B cell (primary cell): ENCODE measurements at regions of chr2 and their contacts with region 1.

Region 1: DNA sequence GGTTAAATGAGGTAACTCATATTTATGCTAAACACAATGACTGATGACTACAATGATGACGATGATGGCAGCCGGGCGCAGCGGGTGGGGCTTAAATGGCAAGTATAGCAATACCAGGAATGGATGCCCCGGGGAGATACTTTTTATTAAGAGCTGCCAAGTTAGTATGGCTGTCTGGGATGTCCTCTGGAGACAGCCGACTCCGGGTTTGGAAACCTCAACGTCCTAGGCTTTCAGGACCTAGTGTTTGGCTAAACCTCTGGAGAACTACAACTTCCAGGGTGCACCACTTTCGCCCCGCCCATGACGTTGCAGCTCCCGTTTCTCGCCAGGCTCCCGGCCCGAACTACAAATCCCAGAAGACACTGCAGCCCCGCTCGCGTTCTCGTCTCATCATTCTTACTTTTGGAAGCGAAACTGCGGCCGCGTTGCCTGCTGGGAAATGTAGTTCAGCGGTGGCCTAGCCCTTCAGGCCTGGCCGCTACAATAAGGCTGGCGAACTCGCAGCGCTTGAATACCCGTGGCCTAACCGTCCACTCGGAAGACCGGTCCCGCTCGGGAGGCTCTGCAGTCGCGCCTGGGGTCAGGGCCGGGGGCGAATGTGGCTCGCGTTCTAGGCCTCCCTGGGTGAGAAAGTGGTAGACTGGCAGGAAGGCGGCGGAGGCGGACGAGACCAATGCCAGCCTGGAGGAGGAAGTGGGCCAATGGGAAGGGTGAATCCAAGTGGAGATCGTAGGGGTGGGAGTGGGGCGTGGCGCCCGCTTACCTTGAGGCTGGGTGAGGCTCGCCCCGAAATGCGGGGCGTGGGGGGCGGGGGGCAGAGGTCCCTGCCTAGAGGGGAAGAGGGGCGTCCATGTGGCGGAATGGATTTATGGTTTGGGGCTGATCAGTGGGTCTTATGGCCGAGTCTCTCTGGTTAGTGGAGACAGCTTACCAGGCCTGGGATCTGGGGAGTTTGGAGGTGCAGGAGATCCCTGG is at the start of gene SMARCAL1:
- DNase-seq: peak; percentile 99
- ATAC-seq: peak; percentile 94
- H3K4me3 ChIP-seq: peak within 1 kb of the TSS; percentile 17 to 94 (median 78)
- H3K4me3 Mint-ChIP-seq: peak within 1 kb of the TSS; percentile 99
- H3K27ac ChIP-seq: peak within 1 kb of the TSS; percentile 78 to 91
- H3K27ac Mint-ChIP-seq: peak within 1 kb of the TSS; percentile 99
- H3K4me1 ChIP-seq: peaks cover 11 to 18% of the 10 kb centered on the region in 2 donors
- H3K4me1 Mint-ChIP-seq: peaks cover 32% of the 10 kb centered on the region
- H3K27me3 ChIP-seq: peaks cover 0 to 4% (median 0%) of the 10 kb centered on the region in 4 experiments
- H3K27me3 Mint-ChIP-seq: peaks cover 11% of the 10 kb centered on the region
- CTCF ChIP-seq: no peak
- total RNA-seq, gene SMARCAL1: 46.7 and 50.7 TPM in 2 replicates

Region 2: DNA sequence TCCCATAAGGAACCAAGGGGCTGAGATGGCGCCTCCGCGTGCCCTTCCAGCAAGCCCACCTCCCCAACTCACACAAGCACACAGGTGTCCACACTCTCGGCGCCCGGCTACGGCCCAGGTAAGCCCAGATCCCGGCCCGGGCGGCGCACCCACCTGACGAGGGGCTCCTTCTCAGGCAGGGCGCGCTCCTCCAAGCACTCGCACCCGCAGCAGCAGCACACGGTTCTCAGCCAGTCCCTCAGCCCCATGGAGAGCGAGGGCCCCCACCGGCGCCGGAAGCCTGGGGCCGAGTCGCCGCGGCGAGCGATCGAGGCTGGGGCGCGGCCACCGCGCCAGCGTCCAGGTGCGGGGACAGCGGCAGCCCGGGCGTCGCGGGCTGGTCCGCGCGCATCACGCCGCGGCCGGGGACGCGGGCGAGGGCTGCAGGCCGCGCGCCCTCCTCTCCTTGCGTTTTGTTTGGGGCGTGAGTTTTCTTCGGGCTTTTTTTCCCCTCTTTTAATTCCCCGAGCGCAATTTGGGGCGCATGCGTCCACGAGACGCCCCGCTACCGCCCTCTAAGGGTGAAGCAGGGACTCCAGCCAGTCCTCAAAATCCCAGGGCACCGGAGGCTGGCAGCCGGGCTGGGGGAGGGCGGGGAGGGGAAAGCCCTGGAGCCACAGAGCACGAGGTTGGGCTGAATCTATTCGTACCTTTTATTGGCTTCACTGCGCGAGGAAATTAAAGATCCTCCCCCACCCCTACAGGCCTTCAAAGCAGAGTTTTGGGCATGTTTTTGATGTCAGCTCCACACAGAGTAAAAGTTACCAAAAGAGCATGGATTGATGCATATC is 399.0 kb before region 1 on chr2 and contains the start of gene MREG:
- CTCF ChIA-PET with region 1: no interaction called
- POLR2A ChIA-PET with region 1: no interaction called
- intact Hi-C with region 1: loop called (anchors 5 kb)
- DNase-seq: peak; percentile 90
- ATAC-seq: peak; percentile 82
- H3K4me3 ChIP-seq: peak within 1 kb of the TSS; percentile 47 to 80 (median 69)
- H3K4me3 Mint-ChIP-seq: peak within 1 kb of the TSS; percentile 93
- H3K27ac ChIP-seq: peak within 1 kb of the TSS; percentile 20 to 61
- H3K27ac Mint-ChIP-seq: peak within 1 kb of the TSS; percentile 84
- H3K4me1 ChIP-seq: peaks cover 30 to 41% of the 10 kb centered on the region in 2 donors
- H3K4me1 Mint-ChIP-seq: peaks cover 49% of the 10 kb centered on the region
- H3K27me3 ChIP-seq: no peaks in the 10 kb centered on the region
- H3K27me3 Mint-ChIP-seq: no peaks in the 10 kb centered on the region
- CTCF ChIP-seq: peak; percentile 74
- total RNA-seq, gene MREG: 5.7 and 6.3 TPM in 2 replicates

Region 3: GRCh38 chr2:216057688-216058193 is 354.6 kb before region 1 on chr2:
- CTCF ChIA-PET with region 1: no interaction called
- POLR2A ChIA-PET with region 1: no interaction called
- intact Hi-C with region 1: loop called (anchors 5 kb)
- DNase-seq: peak; percentile 79
- ATAC-seq: peak; percentile 92
- H3K4me3 ChIP-seq: peak overlapping the region; percentile 13 to 58 (median 50)
- H3K4me3 Mint-ChIP-seq: peak overlapping the region; percentile 84
- H3K27ac ChIP-seq: peak overlapping the region; percentile 93 to 95
- H3K27ac Mint-ChIP-seq: peak overlapping the region; percentile 98
- H3K4me1 ChIP-seq: peaks cover 17 to 19% of the 10 kb centered on the region in 2 donors
- H3K4me1 Mint-ChIP-seq: peaks cover 34% of the 10 kb centered on the region
- H3K27me3 ChIP-seq: no peaks in the 10 kb centered on the region
- H3K27me3 Mint-ChIP-seq: no peaks in the 10 kb centered on the region
- CTCF ChIP-seq: no peak

Region 4: GRCh38 chr2:216108967-216109921 is 303.1 kb before region 1 on chr2 and contains the start of gene XRCC5:
- CTCF ChIA-PET with region 1: no interaction called
- POLR2A ChIA-PET with region 1: no interaction called
- intact Hi-C with region 1: loop called (anchors 1 kb)
- DNase-seq: peak; percentile 99
- ATAC-seq: peak; percentile 91
- H3K4me3 ChIP-seq: peak within 1 kb of the TSS; percentile 71 to 96 (median 95)
- H3K4me3 Mint-ChIP-seq: peak within 1 kb of the TSS; percentile 100
- H3K27ac ChIP-seq: peak within 1 kb of the TSS; percentile 91 to 97
- H3K27ac Mint-ChIP-seq: peak within 1 kb of the TSS; percentile 100
- H3K4me1 ChIP-seq: peaks cover 26 to 31% of the 10 kb centered on the region in 2 donors
- H3K4me1 Mint-ChIP-seq: peaks cover 51% of the 10 kb centered on the region
- H3K27me3 ChIP-seq: no peaks in the 10 kb centered on the region
- H3K27me3 Mint-ChIP-seq: peaks cover 3% of the 10 kb centered on the region
- CTCF ChIP-seq: no peak
- total RNA-seq, gene XRCC5: 198 and 216 TPM in 2 replicates

Region 5: GRCh38 chr2:216114714-216115557 is 297.4 kb before region 1 on chr2:
- CTCF ChIA-PET with region 1: no interaction called
- POLR2A ChIA-PET with region 1: no interaction called
- intact Hi-C with region 1: loop called (anchors 1 kb)
- DNase-seq: peak; percentile 99
- ATAC-seq: peak; percentile 90
- H3K4me3 ChIP-seq: peak overlapping the region; percentile 52 to 90 (median 69)
- H3K4me3 Mint-ChIP-seq: peak overlapping the region; percentile 93
- H3K27ac ChIP-seq: peak overlapping the region; percentile 80 to 96
- H3K27ac Mint-ChIP-seq: peak overlapping the region; percentile 98
- H3K4me1 ChIP-seq: peaks cover 32 to 37% of the 10 kb centered on the region in 2 donors
- H3K4me1 Mint-ChIP-seq: peaks cover 71% of the 10 kb centered on the region
- H3K27me3 ChIP-seq: no peaks in the 10 kb centered on the region
- H3K27me3 Mint-ChIP-seq: no peaks in the 10 kb centered on the region
- CTCF ChIP-seq: peak; percentile 88

Region 6: GRCh38 chr2:216498418-216499413 is 86.4 kb after region 1 on chr2 and contains the start of gene RPL37A:
- CTCF ChIA-PET with region 1: interaction called, 5 read pairs
- POLR2A ChIA-PET with region 1: interaction called, 13 read pairs
- intact Hi-C with region 1: loop called (anchors 1 kb)
- DNase-seq: peak; percentile 94
- ATAC-seq: peak; percentile 97
- H3K4me3 ChIP-seq: peak within 1 kb of the TSS; percentile 65 to 96 (median 92)
- H3K4me3 Mint-ChIP-seq: peak within 1 kb of the TSS; percentile 98
- H3K27ac ChIP-seq: peak within 1 kb of the TSS; percentile 79 to 92
- H3K27ac Mint-ChIP-seq: peak within 1 kb of the TSS; percentile 97
- H3K4me1 ChIP-seq: peaks cover 24 to 25% of the 10 kb centered on the region in 2 donors
- H3K4me1 Mint-ChIP-seq: peaks cover 67% of the 10 kb centered on the region
- H3K27me3 ChIP-seq: no peaks in the 10 kb centered on the region
- H3K27me3 Mint-ChIP-seq: no peaks in the 10 kb centered on the region
- CTCF ChIP-seq: no peak
- total RNA-seq, gene RPL37A: 3,163 and 3,456 TPM in 2 replicates

Region 7: DNA sequence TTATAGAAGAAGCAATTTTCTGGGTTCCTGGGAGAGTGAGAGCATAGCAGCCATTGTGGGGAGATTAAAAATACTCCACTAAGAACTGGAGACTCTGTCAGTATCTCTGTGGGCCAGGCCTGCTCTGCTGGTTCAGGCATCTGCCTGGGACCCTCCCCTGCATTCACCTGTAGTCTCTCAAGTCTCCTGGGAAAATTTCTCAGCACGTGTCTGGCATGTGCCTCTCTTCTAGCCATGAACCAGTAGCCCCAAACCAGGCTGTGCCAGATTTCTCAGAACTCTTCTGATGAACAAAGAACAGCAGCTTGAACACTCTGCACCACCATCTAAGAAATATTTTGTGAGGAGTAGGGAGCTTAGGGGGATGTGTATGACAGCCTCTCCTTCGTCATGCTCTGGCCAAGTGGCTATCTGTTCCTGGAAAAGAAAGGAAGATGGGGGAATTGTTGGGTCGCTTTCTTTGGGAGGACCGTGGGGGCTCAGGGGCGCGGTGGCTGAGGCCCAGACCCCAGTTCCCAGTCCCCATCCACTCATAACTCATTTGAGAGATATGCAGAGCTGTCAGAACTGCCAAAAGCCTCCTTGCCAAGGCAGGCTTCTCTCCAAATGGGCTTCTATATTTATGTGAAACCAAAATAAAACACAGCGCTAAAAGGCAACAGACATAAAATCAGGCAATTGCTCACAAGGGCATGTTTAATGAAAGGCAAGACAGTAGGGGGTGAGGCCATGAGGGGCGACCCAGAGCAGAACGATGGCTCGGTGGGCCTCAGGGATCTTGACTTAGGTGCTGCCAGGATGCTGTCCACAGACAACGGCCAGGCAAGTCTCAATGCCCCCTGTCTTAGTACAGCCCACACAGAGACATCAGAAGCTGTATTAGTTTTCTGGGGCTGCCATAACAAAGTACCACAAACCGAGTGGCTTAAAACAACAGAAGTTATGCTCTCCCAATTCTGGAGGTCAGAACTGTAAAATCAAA is 562.3 kb after region 1 on chr2:
- CTCF ChIA-PET with region 1: no interaction called
- POLR2A ChIA-PET with region 1: no interaction called
- intact Hi-C with region 1: no loop called
- DNase-seq: no peak
- ATAC-seq: no peak
- H3K4me3 ChIP-seq: no peak overlapping the region
- H3K4me3 Mint-ChIP-seq: no peak overlapping the region
- H3K27ac ChIP-seq: no peak overlapping the region
- H3K27ac Mint-ChIP-seq: no peak overlapping the region
- H3K4me1 ChIP-seq: no peaks in the 10 kb centered on the region
- H3K4me1 Mint-ChIP-seq: no peaks in the 10 kb centered on the region
- H3K27me3 ChIP-seq: peaks cover 0 to 3% (median 0%) of the 10 kb centered on the region in 4 experiments
- H3K27me3 Mint-ChIP-seq: peaks cover 7% of the 10 kb centered on the region
- CTCF ChIP-seq: no peak